Lower lobe of right lung (tissue), 2 donors: ENCODE measurements at regions of chr2 and their contacts with region 1.

Region 1: DNA sequence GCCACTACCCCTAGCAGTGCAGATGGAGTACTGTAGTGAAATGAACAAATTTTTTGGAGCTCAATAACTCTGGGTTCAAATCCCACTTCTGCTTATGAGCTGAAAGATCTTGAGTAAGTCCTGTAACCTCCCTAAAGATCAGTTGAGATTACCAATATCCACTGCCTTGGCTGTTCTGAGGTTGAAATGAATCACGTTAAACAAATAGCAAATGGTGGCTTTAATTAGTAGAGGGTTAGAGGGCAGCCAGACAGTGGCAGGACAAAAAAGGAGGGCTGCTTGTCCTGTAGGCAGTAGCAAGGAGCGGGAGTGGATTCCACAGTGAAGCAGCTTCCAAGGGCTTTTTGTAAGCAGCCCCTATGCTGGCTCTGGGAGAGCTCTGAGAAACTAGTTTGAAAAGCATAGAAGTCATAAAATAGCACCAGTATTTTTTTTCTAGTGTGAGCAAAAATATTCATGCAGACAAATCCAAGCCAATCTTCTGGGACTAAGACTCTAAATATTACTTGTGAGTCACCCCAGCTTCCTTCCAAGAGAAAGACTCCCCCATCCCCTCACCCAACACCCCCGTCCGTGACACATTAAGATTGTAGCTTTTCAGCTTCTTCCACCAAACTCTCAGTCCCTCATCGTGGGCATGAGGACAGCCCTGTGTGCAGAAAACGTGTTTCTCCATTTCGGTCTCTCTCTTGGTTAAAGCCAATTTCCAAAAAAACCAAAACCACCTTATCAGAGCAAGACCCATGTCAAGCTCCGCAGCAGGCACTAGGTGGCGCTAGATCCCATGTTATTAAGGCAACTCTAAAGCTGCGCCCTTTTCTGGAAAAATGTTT is 123.5 kb upstream of the LGALSL start:
- DNase-seq: peak; percentile 83
- ATAC-seq: peak; percentile 76 to 79
- H3K4me3 ChIP-seq: peak overlapping the region; percentile 17
- H3K27ac ChIP-seq: peak overlapping the region; percentile 71
- H3K4me1 ChIP-seq: peaks cover 48% of the 10 kb centered on the region
- H3K27me3 ChIP-seq: no peaks in the 10 kb centered on the region
- CTCF ChIP-seq: peak; percentile 93

Region 2: GRCh38 chr2:64040161-64040560 is 290.3 kb before region 1 on chr2:
- intact Hi-C with region 1: loop called (anchors 10 kb)
- DNase-seq: no peak
- ATAC-seq: no peak
- H3K4me3 ChIP-seq: no peak overlapping the region
- H3K27ac ChIP-seq: no peak overlapping the region
- H3K4me1 ChIP-seq: peaks cover 4% of the 10 kb centered on the region
- H3K27me3 ChIP-seq: no peaks in the 10 kb centered on the region
- CTCF ChIP-seq: no peak

Region 3: GRCh38 chr2:64144057-64145013 is 186.2 kb before region 1 on chr2 and contains the start of gene PELI1:
- intact Hi-C with region 1: no loop called
- DNase-seq: peak; percentile 95
- ATAC-seq: peak; percentile 98 to 99
- H3K4me3 ChIP-seq: peak within 1 kb of the TSS; percentile 85
- H3K27ac ChIP-seq: peak within 1 kb of the TSS; percentile 99
- H3K4me1 ChIP-seq: peaks cover 28% of the 10 kb centered on the region
- H3K27me3 ChIP-seq: no peaks in the 10 kb centered on the region
- CTCF ChIP-seq: peak; percentile 32
- total RNA-seq, gene PELI1: 34.1 TPM

Region 4: GRCh38 chr2:64488050-64488974 is 157.8 kb after region 1 on chr2:
- intact Hi-C with region 1: loop called (anchors 5 kb)
- DNase-seq: peak; percentile 77
- ATAC-seq: peak; percentile 80 to 86
- H3K4me3 ChIP-seq: no peak overlapping the region
- H3K27ac ChIP-seq: no peak overlapping the region
- H3K4me1 ChIP-seq: peaks cover 8% of the 10 kb centered on the region
- H3K27me3 ChIP-seq: no peaks in the 10 kb centered on the region
- CTCF ChIP-seq: peak; percentile 98